Mammary epithelial cell (primary cell): ENCODE measurements at regions of chr6 and their contacts with region 1.

Region 1: DNA sequence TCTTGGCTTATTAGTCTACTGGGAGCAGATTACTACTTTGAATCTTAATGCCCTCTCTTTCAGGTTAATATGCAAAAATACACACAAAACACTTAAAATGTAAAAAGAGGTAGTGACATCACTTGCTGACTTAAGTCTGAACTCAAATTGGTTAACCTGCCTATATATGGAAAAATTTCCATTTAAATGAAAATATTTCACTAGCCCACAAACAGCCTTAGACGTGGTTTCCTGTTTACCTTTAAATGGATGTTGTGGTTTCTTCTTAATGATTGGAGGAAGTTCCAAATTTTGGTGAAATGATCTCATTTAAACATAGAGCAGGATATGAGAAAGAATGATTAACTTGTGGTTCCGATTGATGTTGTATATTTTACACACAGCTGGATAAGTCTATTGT is 553.7 kb downstream of the CD109 start:
- DNase-seq: peak; percentile 28
- H3K4me3 ChIP-seq: no peak overlapping the region
- H3K27ac ChIP-seq: no peak overlapping the region
- H3K4me1 ChIP-seq: peaks cover 2% of the 10 kb centered on the region
- H3K27me3 ChIP-seq: no peaks in the 10 kb centered on the region
- CTCF ChIP-seq: no peak

Region 2: GRCh38 chr6:74114428-74114827 is 135.2 kb before region 1 on chr6:
- CTCF ChIA-PET with region 1: no interaction called
- dilution Hi-C with region 1: no loop called
- in situ Hi-C with region 1: no loop called
- intact Hi-C with region 1: no loop called
- DNase-seq: no peak
- H3K4me3 ChIP-seq: no peak overlapping the region
- H3K27ac ChIP-seq: no peak overlapping the region
- H3K4me1 ChIP-seq: no peaks in the 10 kb centered on the region
- H3K27me3 ChIP-seq: peaks cover 2% of the 10 kb centered on the region
- CTCF ChIP-seq: no peak

Region 3: DNA sequence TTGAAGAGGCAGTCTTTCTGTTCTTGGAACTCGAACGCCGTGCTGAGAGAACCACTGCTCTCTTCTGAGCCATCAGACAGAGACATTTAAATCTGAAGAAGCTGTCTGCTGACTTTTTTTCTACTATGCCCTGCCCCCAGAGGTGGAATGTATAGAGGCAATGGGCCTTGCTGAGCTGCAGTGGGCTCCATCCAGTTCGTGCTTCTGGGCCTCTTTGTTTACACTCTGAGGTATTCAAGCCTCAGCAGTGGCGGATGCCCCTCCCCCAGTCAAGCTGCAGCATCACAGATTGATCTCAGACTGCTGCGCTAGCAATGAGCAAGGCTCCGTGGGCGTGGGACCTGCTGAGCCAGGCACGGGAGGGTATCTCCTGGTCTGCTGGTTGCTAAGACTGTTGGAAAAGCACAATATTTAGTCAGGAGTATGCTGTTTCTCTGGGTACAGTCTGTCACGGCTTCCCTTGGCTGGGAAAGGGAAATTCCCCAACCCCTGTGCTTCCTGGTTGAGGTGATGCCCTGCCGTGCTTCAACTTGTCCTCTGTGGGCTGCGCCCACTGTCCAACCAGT is 26.8 kb before region 1 on chr6:
- CTCF ChIA-PET with region 1: interaction called, 13 read pairs
- dilution Hi-C with region 1: no loop called
- in situ Hi-C with region 1: no loop called
- intact Hi-C with region 1: no loop called
- DNase-seq: no peak
- H3K4me3 ChIP-seq: no peak overlapping the region
- H3K27ac ChIP-seq: no peak overlapping the region
- H3K4me1 ChIP-seq: no peaks in the 10 kb centered on the region
- H3K27me3 ChIP-seq: peaks cover 4% of the 10 kb centered on the region
- CTCF ChIP-seq: no peak

Region 4: DNA sequence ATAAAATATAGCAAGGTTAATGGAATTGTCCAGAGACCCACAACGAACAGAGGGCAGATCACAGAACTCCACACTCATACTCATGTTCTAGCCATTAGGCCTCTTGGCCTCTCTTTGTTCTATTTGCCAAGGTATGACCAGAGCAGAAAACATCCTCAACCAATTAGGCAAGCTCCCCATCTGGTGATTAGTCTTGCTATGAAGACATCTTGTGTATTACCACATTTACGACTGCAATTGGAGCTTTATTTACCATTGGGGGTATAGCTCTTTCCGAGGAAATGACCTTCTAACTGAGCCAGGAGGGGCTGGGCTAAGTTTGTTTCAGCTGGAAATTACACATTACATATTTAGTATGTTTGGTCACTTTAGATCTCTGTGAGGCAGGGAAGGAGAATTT is 40.2 kb after region 1 on chr6:
- CTCF ChIA-PET with region 1: no interaction called
- dilution Hi-C with region 1: no loop called
- in situ Hi-C with region 1: no loop called
- intact Hi-C with region 1: no loop called
- DNase-seq: no peak
- H3K4me3 ChIP-seq: no peak overlapping the region
- H3K27ac ChIP-seq: no peak overlapping the region
- H3K4me1 ChIP-seq: no peaks in the 10 kb centered on the region
- H3K27me3 ChIP-seq: peaks cover 3% of the 10 kb centered on the region
- CTCF ChIP-seq: no peak

Region 5: DNA sequence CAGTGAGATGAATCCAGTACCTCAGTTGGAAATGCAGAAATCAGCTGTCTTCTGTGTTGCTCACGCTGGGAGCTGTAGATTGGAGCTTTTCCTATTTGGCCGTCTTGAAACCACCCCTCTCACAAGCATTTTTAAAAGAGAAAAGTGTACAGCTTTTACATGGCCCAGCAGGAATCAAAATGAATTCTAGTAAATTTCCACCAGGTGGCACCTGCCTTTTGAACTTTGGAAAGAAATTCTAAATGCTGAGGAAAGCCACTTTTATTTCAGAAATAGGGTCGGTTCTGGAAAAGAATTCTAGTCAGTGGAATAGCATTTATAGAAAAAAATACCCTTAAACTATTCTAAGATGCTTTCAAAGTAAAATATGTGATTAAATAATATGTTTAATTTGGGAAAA is 94.1 kb after region 1 on chr6:
- CTCF ChIA-PET with region 1: no interaction called
- dilution Hi-C with region 1: no loop called
- in situ Hi-C with region 1: no loop called
- intact Hi-C with region 1: no loop called
- DNase-seq: no peak
- H3K4me3 ChIP-seq: no peak overlapping the region
- H3K27ac ChIP-seq: no peak overlapping the region
- H3K4me1 ChIP-seq: no peaks in the 10 kb centered on the region
- H3K27me3 ChIP-seq: no peaks in the 10 kb centered on the region
- CTCF ChIP-seq: peak; percentile 19 to 53